SK-N-SH (cell line): ENCODE measurements at regions of chr15 and their contacts with region 1.

Region 1: DNA sequence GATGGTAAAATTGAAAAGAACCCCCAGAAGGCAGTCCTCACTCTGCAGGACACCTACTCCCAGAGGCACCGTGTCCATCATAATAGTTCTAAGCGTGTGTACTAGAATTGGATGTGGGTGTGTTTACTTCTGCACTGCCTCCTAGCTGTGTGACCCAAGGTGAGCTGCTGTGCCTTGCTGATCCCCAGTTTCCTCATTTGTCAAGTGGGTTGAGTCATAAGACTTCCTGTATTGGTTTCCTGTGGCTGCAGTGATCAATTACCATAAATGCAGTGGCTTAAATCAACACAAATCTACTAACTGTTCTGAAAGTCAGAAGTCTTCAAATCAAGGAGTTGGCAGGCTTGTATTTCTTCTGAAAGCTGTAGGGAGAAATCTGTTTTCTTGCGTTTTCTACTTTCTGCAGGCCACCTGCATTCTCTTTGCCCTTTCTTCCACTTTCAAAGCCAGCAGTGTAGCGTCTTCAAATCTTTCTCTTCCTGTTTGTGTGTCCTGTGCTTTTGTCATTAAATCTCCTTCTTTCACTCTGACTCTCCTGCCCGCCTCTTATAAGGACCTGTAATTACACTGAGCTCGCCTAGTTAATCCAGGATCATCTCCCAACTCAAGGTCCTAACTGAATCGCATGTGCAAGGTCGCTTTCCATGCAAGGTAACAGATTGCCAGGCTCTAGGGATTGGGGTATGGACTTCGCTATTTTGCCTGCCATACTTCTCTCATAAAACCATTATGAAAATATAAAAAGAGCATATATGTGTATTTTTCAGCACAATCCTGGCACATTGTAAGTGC is 59.0 kb downstream of the RORA start:
- DNase-seq: no peak
- H3K4me3 ChIP-seq: no peak overlapping the region
- H3K27ac ChIP-seq: no peak overlapping the region
- H3K4me1 ChIP-seq: peaks cover 7% of the 10 kb centered on the region in 2 experiments; a peak in 2 of 4 replicates
- H3K27me3 ChIP-seq: no peaks in the 10 kb centered on the region
- CTCF ChIP-seq: no peak
- EP300 ChIP-seq: no peak
- RAD21 ChIP-seq: no peak

Region 2: GRCh38 chr15:61151791-61152190 is 18.3 kb before region 1 on chr15:
- CTCF ChIA-PET with region 1: interaction called, 11 read pairs
- POLR2A ChIA-PET with region 1: no interaction called
- DNase-seq: no peak
- H3K4me3 ChIP-seq: no peak overlapping the region
- H3K27ac ChIP-seq: no peak overlapping the region
- H3K4me1 ChIP-seq: peaks cover 0 to 9% of the 10 kb centered on the region in 2 experiments; a peak in 1 of 4 replicates
- H3K27me3 ChIP-seq: no peaks in the 10 kb centered on the region
- CTCF ChIP-seq: no peak
- EP300 ChIP-seq: no peak
- RAD21 ChIP-seq: no peak

Region 3: GRCh38 chr15:61621146-61621545 is 451.0 kb after region 1 on chr15:
- CTCF ChIA-PET with region 1: interaction called, 31 read pairs
- POLR2A ChIA-PET with region 1: no interaction called
- DNase-seq: peak; percentile 61
- H3K4me3 ChIP-seq: no peak overlapping the region
- H3K27ac ChIP-seq: no peak overlapping the region
- H3K4me1 ChIP-seq: no peaks in the 10 kb centered on the region
- H3K27me3 ChIP-seq: no peaks in the 10 kb centered on the region
- CTCF ChIP-seq: peak; percentile 64
- EP300 ChIP-seq: no peak
- RAD21 ChIP-seq: peak; percentile 87